WTC11 (cell line): ENCODE measurements at regions of chr17 and their contacts with region 1.

Region 1: GRCh38 chr17:81722184-81723120 is 10.4 kb downstream of the SLC25A10 start:
- DNase-seq: no peak
- ATAC-seq: peak; percentile 27
- H3K4me3 Mint-ChIP-seq: no peak overlapping the region
- H3K27ac Mint-ChIP-seq: no peak overlapping the region
- H3K4me1 Mint-ChIP-seq: peaks cover 10% of the 10 kb centered on the region
- H3K27me3 Mint-ChIP-seq: no peaks in the 10 kb centered on the region
- CTCF ChIP-seq: no peak

Region 2: GRCh38 chr17:81621494-81622130 is 100.8 kb before region 1 on chr17:
- CTCF ChIA-PET with region 1: no interaction called
- POLR2A ChIA-PET with region 1: no interaction called
- DNase-seq: no peak
- ATAC-seq: no peak
- H3K4me3 Mint-ChIP-seq: no peak overlapping the region
- H3K27ac Mint-ChIP-seq: no peak overlapping the region
- H3K4me1 Mint-ChIP-seq: no peaks in the 10 kb centered on the region
- H3K27me3 Mint-ChIP-seq: no peaks in the 10 kb centered on the region
- CTCF ChIP-seq: no peak

Region 3: DNA sequence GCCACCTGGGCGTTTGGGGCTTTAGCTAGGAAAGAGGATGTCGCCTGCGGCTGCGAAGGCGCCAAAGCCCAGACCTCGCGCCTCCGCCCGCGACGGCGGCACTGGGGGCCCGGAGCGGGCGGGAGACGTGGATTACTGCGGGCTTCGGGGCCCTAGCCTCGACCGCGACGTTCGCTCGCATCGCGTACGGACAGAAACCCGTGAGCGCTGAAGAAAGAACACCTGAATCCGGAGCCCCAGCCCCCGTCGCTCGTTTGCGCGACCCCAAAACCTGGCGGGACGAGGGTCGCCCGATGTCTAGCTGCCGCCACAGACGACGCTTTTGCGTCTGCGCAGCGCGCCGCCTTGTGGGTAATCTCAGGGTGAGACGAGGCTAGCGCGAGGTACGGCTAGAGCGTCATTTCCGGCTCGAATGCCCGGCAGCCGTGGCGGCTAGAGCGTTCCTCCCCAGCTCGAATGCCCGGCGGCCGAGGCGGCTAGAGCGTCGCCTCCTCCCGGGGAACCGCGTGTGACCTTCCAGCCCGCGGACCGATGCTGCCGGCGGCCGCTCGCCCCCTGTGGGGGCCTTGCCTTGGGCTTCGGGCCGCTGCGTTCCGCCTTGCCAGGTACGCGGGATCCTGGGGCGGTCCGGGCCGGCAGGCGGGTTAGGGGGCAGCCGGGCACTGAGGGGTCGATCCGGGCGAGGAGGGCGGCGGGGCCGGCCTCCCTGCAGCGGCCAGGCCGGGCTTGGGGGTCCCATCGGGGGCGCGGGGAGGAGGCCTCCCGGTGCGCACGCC is 19.3 kb before region 1 on chr17 and contains the start of gene MRPL12:
- CTCF ChIA-PET with region 1: interaction called, 3 read pairs
- POLR2A ChIA-PET with region 1: interaction called, 10 read pairs
- DNase-seq: peak; percentile 94
- ATAC-seq: peak; percentile 84
- H3K4me3 Mint-ChIP-seq: peak within 1 kb of the TSS; percentile 98
- H3K27ac Mint-ChIP-seq: peak within 1 kb of the TSS; percentile 95
- H3K4me1 Mint-ChIP-seq: peaks cover 16% of the 10 kb centered on the region
- H3K27me3 Mint-ChIP-seq: no peaks in the 10 kb centered on the region
- CTCF ChIP-seq: peak; percentile 28; the same call in 1 of the 2 replicates
- total RNA-seq, gene MRPL12: 134 to 139 TPM (median 136 TPM) in 3 replicates